CD4-positive, alpha-beta T cell (primary cell): ENCODE measurements at regions of chr13 and their contacts with region 1.

Region 1: GRCh38 chr13:49976314-49977258 is 20.3 kb upstream of the TRIM13 start:
- DNase-seq: peak; percentile 65 to 91 (median 74)
- ATAC-seq: peak; percentile 90
- H3K4me3 ChIP-seq: no peak overlapping the region
- H3K4me3 Mint-ChIP-seq: no peak overlapping the region
- H3K27ac ChIP-seq: no peak overlapping the region
- H3K27ac Mint-ChIP-seq: no peak overlapping the region
- H3K4me1 ChIP-seq: no peaks in the 10 kb centered on the region
- H3K4me1 Mint-ChIP-seq: peaks cover 4% of the 10 kb centered on the region
- H3K27me3 ChIP-seq: no peaks in the 10 kb centered on the region
- H3K27me3 Mint-ChIP-seq: no peaks in the 10 kb centered on the region
- CTCF ChIP-seq: peak; percentile 97

Region 2: GRCh38 chr13:50268500-50268899 is 291.9 kb after region 1 on chr13:
- CTCF ChIA-PET with region 1: no interaction called
- POLR2A ChIA-PET with region 1: no interaction called
- intact Hi-C with region 1: loop called in 1 of 2 experiments (anchors 10 kb)
- DNase-seq: no peak
- ATAC-seq: no peak
- H3K4me3 ChIP-seq: no peak overlapping the region
- H3K4me3 Mint-ChIP-seq: no peak overlapping the region
- H3K27ac ChIP-seq: no peak overlapping the region
- H3K27ac Mint-ChIP-seq: no peak overlapping the region
- H3K4me1 ChIP-seq: no peaks in the 10 kb centered on the region
- H3K4me1 Mint-ChIP-seq: no peaks in the 10 kb centered on the region
- H3K27me3 ChIP-seq: no peaks in the 10 kb centered on the region
- H3K27me3 Mint-ChIP-seq: no peaks in the 10 kb centered on the region
- CTCF ChIP-seq: peak; percentile 9

Region 3: DNA sequence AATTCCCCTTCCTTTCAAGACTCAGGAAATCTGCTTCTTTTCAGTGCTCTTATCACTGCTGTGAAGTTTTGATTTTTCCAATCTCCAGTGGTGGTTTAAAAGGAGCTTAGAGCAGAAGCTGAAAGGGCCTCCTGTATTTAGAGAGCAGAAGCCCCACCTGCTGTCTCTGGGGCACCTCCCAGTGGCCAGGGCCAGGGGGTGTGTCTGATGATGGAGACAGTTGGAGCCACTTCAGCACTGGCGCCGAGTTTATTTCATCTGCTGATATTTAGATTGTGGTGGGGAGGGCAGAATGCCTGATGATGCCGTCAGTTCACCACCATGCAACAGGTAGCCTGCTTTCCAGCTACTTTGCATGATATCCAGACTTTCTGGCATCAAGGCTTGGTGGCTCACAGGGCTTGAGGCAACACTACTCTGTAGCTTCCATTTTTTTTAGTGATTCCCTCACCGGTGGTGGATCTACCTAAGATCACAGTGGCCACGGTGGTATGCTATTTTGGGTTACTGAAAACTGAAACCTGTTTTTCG is 410.5 kb after region 1 on chr13:
- CTCF ChIA-PET with region 1: interaction called, 5 read pairs
- POLR2A ChIA-PET with region 1: no interaction called
- intact Hi-C with region 1: loop called in 1 of 2 experiments (anchors 10 kb)
- DNase-seq: peak; percentile 11 to 56 (median 30)
- ATAC-seq: peak; percentile 48
- H3K4me3 ChIP-seq: no peak overlapping the region
- H3K4me3 Mint-ChIP-seq: no peak overlapping the region
- H3K27ac ChIP-seq: no peak overlapping the region
- H3K27ac Mint-ChIP-seq: no peak overlapping the region
- H3K4me1 ChIP-seq: peaks cover 11% of the 10 kb centered on the region
- H3K4me1 Mint-ChIP-seq: peaks cover 5% of the 10 kb centered on the region
- H3K27me3 ChIP-seq: no peaks in the 10 kb centered on the region
- H3K27me3 Mint-ChIP-seq: no peaks in the 10 kb centered on the region
- CTCF ChIP-seq: peak; percentile 25

Region 4: GRCh38 chr13:50531917-50532899 is 555.6 kb after region 1 on chr13:
- CTCF ChIA-PET with region 1: no interaction called
- POLR2A ChIA-PET with region 1: no interaction called
- intact Hi-C with region 1: loop called (anchors 1 to 2 kb)
- DNase-seq: peak in 3 of 14 experiments; percentile 23 to 37 (median 26)
- ATAC-seq: no peak
- H3K4me3 ChIP-seq: no peak overlapping the region
- H3K4me3 Mint-ChIP-seq: no peak overlapping the region
- H3K27ac ChIP-seq: no peak overlapping the region
- H3K27ac Mint-ChIP-seq: no peak overlapping the region
- H3K4me1 ChIP-seq: peaks cover 12% of the 10 kb centered on the region
- H3K4me1 Mint-ChIP-seq: peaks cover 25% of the 10 kb centered on the region
- H3K27me3 ChIP-seq: no peaks in the 10 kb centered on the region
- H3K27me3 Mint-ChIP-seq: no peaks in the 10 kb centered on the region
- CTCF ChIP-seq: peak; percentile 42

Region 5: GRCh38 chr13:50801087-50801931 is 824.7 kb after region 1 on chr13:
- CTCF ChIA-PET with region 1: interaction called, 6 read pairs
- POLR2A ChIA-PET with region 1: interaction called, 4 read pairs
- intact Hi-C with region 1: loop called (anchors 1 kb)
- DNase-seq: peak; percentile 19 to 85 (median 48)
- ATAC-seq: peak; percentile 88
- H3K4me3 ChIP-seq: no peak overlapping the region
- H3K4me3 Mint-ChIP-seq: no peak overlapping the region
- H3K27ac ChIP-seq: no peak overlapping the region
- H3K27ac Mint-ChIP-seq: no peak overlapping the region
- H3K4me1 ChIP-seq: peaks cover 6% of the 10 kb centered on the region
- H3K4me1 Mint-ChIP-seq: peaks cover 7% of the 10 kb centered on the region
- H3K27me3 ChIP-seq: no peaks in the 10 kb centered on the region
- H3K27me3 Mint-ChIP-seq: no peaks in the 10 kb centered on the region
- CTCF ChIP-seq: peak; percentile 75

Region 6: DNA sequence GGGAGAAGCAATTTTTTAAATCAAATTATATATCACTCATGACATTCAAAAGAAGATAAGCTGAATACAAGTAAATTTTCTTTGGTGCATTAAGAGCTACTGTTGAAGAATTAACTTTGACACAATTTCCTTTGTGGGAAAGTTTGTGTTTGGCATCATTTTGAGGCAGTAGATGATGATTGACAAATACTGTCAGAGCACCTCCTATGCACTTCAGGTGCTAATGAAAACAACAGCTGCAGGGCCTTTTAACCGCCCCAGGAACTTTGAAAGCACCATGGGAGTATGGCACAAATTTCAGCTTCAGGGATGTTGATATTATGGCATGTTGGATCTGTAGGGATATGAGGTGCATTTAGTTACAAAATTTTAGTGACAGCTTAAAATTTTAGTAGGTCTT is 887.9 kb after region 1 on chr13:
- CTCF ChIA-PET with region 1: no interaction called
- POLR2A ChIA-PET with region 1: no interaction called
- intact Hi-C with region 1: no loop called
- DNase-seq: no peak
- ATAC-seq: no peak
- H3K4me3 ChIP-seq: no peak overlapping the region
- H3K4me3 Mint-ChIP-seq: no peak overlapping the region
- H3K27ac ChIP-seq: no peak overlapping the region
- H3K27ac Mint-ChIP-seq: no peak overlapping the region
- H3K4me1 ChIP-seq: no peaks in the 10 kb centered on the region
- H3K4me1 Mint-ChIP-seq: no peaks in the 10 kb centered on the region
- H3K27me3 ChIP-seq: no peaks in the 10 kb centered on the region
- H3K27me3 Mint-ChIP-seq: no peaks in the 10 kb centered on the region
- CTCF ChIP-seq: no peak

Region 7: DNA sequence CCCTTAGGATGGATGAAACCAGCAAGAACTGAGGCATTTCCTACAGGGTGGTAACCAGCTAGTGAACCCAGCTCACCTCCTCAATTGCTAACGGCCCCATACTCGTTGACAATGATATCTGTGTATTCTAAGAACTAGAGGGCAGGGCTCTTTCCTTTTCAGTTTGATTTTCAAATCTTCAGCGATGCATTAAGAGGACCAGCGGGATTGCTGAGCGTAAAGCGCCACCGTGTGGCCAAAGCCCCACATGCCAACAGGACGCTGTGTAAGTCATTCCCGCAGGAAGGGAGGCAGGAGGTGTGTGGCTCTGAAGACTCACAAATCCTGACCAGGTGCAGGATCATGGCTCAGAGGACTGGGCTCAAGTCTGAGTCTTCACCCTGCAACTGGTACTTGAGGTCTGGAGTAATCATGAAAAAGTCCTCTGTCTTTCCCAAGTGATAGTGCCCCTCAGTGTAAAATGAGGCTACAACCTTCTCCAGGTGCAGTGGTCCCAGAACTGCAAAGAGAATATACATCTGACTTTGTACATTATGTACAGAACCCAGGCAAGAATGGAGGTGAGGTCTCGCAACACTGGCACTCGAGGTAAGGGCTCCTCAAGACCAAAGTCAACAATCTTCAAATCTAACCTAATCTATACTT is 1093.5 kb after region 1 on chr13:
- CTCF ChIA-PET with region 1: interaction called, 5 read pairs
- POLR2A ChIA-PET with region 1: no interaction called
- intact Hi-C with region 1: loop called (anchors 1 kb)
- DNase-seq: peak; percentile 57 to 84 (median 72)
- ATAC-seq: peak; percentile 85
- H3K4me3 ChIP-seq: no peak overlapping the region
- H3K4me3 Mint-ChIP-seq: no peak overlapping the region
- H3K27ac ChIP-seq: no peak overlapping the region
- H3K27ac Mint-ChIP-seq: no peak overlapping the region
- H3K4me1 ChIP-seq: peaks cover 9% of the 10 kb centered on the region
- H3K4me1 Mint-ChIP-seq: peaks cover 7% of the 10 kb centered on the region
- H3K27me3 ChIP-seq: peaks cover 6 to 18% of the 10 kb centered on the region in 2 experiments
- H3K27me3 Mint-ChIP-seq: peaks cover 26% of the 10 kb centered on the region
- CTCF ChIP-seq: peak; percentile 93

Region 8: DNA sequence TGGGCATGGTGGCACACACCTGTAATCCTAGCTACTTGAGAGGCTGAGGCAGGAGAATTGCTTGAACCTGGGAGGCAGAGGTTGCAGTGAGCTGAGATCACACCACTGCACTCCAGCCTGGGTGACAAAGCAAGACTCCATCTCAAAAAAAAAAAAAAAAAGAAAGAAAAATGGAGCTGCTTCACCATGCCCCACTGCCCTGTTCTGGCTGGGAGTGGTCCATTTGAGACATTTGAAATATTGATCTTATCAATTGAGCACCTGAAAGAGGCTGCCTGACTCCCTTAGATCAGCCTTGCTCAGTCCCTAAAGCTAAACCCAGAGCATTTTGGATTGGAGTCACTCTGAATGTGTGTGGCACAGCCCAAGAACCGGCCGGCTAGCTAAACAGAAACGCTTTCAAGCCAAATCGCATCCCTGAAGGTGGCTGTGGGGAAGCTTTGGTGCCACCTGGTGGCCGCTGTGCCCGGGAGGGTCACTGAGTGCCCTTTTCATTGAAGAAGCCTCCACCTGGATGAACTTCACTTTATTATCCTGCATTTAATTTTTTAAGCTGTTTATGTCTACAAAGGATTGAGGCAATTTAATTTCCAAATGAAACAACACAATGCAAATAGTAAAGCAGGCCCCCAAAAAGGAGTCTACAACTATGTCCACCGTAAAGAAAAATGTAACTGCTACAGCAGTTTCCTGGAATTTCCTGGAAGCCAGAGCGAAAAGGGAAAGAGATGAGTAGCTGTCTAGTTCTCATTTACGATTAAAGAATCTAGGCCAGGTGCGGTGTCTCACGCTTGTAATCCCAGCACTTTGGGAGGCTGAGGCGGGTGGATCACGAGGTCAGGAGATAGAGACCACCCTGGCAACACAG is 1309.8 kb after region 1 on chr13:
- CTCF ChIA-PET with region 1: no interaction called
- POLR2A ChIA-PET with region 1: no interaction called
- intact Hi-C with region 1: loop called (anchors 5 kb)
- DNase-seq: peak; percentile 33 to 73 (median 56)
- ATAC-seq: peak; percentile 52
- H3K4me3 ChIP-seq: no peak overlapping the region
- H3K4me3 Mint-ChIP-seq: no peak overlapping the region
- H3K27ac ChIP-seq: no peak overlapping the region
- H3K27ac Mint-ChIP-seq: no peak overlapping the region
- H3K4me1 ChIP-seq: peaks cover 3% of the 10 kb centered on the region
- H3K4me1 Mint-ChIP-seq: no peaks in the 10 kb centered on the region
- H3K27me3 ChIP-seq: no peaks in the 10 kb centered on the region
- H3K27me3 Mint-ChIP-seq: peaks cover 8% of the 10 kb centered on the region
- CTCF ChIP-seq: peak; percentile 87